ENCODE measurements at regions of chr12 and their contacts with region 1.

Region 1: GRCh38 chr12:751192-751998 is 984 bp upstream of the WNK1 start:
- DNase-seq: peak; percentile 68 to 93
- ATAC-seq: peak; percentile 34 to 52 (median 45)
- H3K4me3 ChIP-seq: peak overlapping the region; percentile 97
- H3K4me3 Mint-ChIP-seq: no peak overlapping the region
- H3K27ac ChIP-seq: peak overlapping the region; percentile 76
- H3K27ac Mint-ChIP-seq: no peak overlapping the region
- H3K4me1 ChIP-seq: peaks cover 13% of the 10 kb centered on the region
- H3K4me1 Mint-ChIP-seq: peaks cover 34% of the 10 kb centered on the region in 2 donors
- H3K27me3 ChIP-seq: no peaks in the 10 kb centered on the region
- H3K27me3 Mint-ChIP-seq: no peaks in the 10 kb centered on the region
- CTCF ChIP-seq: peak; percentile 41

Region 2: GRCh38 chr12:630656-631632 is 120.5 kb before region 1 on chr12:
- intact Hi-C with region 1: loop called (anchors 2 kb)
- DNase-seq: peak in 1 of 2 donors; percentile 68
- ATAC-seq: peak in 2 of 3 donors; percentile 92 to 97
- H3K4me3 ChIP-seq: peak overlapping the region; percentile 45
- H3K4me3 Mint-ChIP-seq: no peak overlapping the region
- H3K27ac ChIP-seq: peak overlapping the region; percentile 68
- H3K27ac Mint-ChIP-seq: peak overlapping the region in 1 of 2 donors; percentile 96
- H3K4me1 ChIP-seq: no peaks in the 10 kb centered on the region
- H3K4me1 Mint-ChIP-seq: peaks cover 0 to 22% of the 10 kb centered on the region in 2 donors
- H3K27me3 ChIP-seq: no peaks in the 10 kb centered on the region
- H3K27me3 Mint-ChIP-seq: no peaks in the 10 kb centered on the region
- CTCF ChIP-seq: no peak

Region 3: GRCh38 chr12:674272-674781 is 77.1 kb before region 1 on chr12:
- intact Hi-C with region 1: loop called (anchors 5 kb)
- DNase-seq: peak; percentile 52 to 87
- ATAC-seq: peak; percentile 94 to 95 (median 95)
- H3K4me3 ChIP-seq: no peak overlapping the region
- H3K4me3 Mint-ChIP-seq: peak overlapping the region; percentile 68
- H3K27ac ChIP-seq: peak overlapping the region; percentile 79
- H3K27ac Mint-ChIP-seq: peak overlapping the region; percentile 77 to 93
- H3K4me1 ChIP-seq: peaks cover 26% of the 10 kb centered on the region
- H3K4me1 Mint-ChIP-seq: peaks cover 29 to 36% of the 10 kb centered on the region in 2 donors
- H3K27me3 ChIP-seq: no peaks in the 10 kb centered on the region
- H3K27me3 Mint-ChIP-seq: no peaks in the 10 kb centered on the region
- CTCF ChIP-seq: no peak

Region 4: GRCh38 chr12:724194-724855 is 27.1 kb before region 1 on chr12:
- intact Hi-C with region 1: no loop called
- DNase-seq: peak in 1 of 2 donors; percentile 58
- ATAC-seq: peak; percentile 60 to 70 (median 64)
- H3K4me3 ChIP-seq: no peak overlapping the region
- H3K4me3 Mint-ChIP-seq: no peak overlapping the region
- H3K27ac ChIP-seq: no peak overlapping the region
- H3K27ac Mint-ChIP-seq: peak overlapping the region in 1 of 2 donors; percentile 20
- H3K4me1 ChIP-seq: no peaks in the 10 kb centered on the region
- H3K4me1 Mint-ChIP-seq: peaks cover 16 to 29% of the 10 kb centered on the region in 2 donors
- H3K27me3 ChIP-seq: no peaks in the 10 kb centered on the region
- H3K27me3 Mint-ChIP-seq: peaks cover 0 to 4% of the 10 kb centered on the region in 2 donors
- CTCF ChIP-seq: no peak

Region 5: GRCh38 chr12:810671-811415 is 59.4 kb after region 1 on chr12:
- intact Hi-C with region 1: loop called (anchors 5 kb)
- DNase-seq: no peak
- ATAC-seq: no peak
- H3K4me3 ChIP-seq: no peak overlapping the region
- H3K4me3 Mint-ChIP-seq: no peak overlapping the region
- H3K27ac ChIP-seq: no peak overlapping the region
- H3K27ac Mint-ChIP-seq: peak overlapping the region in 1 of 2 donors; percentile 51
- H3K4me1 ChIP-seq: peaks cover 18% of the 10 kb centered on the region
- H3K4me1 Mint-ChIP-seq: peaks cover 46 to 58% of the 10 kb centered on the region in 2 donors
- H3K27me3 ChIP-seq: no peaks in the 10 kb centered on the region
- H3K27me3 Mint-ChIP-seq: no peaks in the 10 kb centered on the region
- CTCF ChIP-seq: no peak

Region 6: GRCh38 chr12:1594261-1595025 is 843.0 kb after region 1 on chr12 and contains the start of gene FBXL14:
- intact Hi-C with region 1: loop called (anchors 5 kb)
- DNase-seq: peak; percentile 89 to 95
- ATAC-seq: peak; percentile 75 to 87 (median 79)
- H3K4me3 ChIP-seq: peak within 1 kb of the TSS; percentile 78
- H3K4me3 Mint-ChIP-seq: peak within 1 kb of the TSS; percentile 95
- H3K27ac ChIP-seq: peak within 1 kb of the TSS; percentile 97
- H3K27ac Mint-ChIP-seq: peak within 1 kb of the TSS; percentile 95 to 98
- H3K4me1 ChIP-seq: peaks cover 34% of the 10 kb centered on the region
- H3K4me1 Mint-ChIP-seq: peaks cover 49 to 58% of the 10 kb centered on the region in 2 donors
- H3K27me3 ChIP-seq: no peaks in the 10 kb centered on the region
- H3K27me3 Mint-ChIP-seq: no peaks in the 10 kb centered on the region
- CTCF ChIP-seq: no peak
- total RNA-seq, gene FBXL14: 18.7 to 24.9 (median 22.8) TPM

Measured in natural killer cell (primary cell).